Kidney (tissue), 22 donors: ENCODE measurements at regions of chr10 and their contacts with region 1.

Region 1: DNA sequence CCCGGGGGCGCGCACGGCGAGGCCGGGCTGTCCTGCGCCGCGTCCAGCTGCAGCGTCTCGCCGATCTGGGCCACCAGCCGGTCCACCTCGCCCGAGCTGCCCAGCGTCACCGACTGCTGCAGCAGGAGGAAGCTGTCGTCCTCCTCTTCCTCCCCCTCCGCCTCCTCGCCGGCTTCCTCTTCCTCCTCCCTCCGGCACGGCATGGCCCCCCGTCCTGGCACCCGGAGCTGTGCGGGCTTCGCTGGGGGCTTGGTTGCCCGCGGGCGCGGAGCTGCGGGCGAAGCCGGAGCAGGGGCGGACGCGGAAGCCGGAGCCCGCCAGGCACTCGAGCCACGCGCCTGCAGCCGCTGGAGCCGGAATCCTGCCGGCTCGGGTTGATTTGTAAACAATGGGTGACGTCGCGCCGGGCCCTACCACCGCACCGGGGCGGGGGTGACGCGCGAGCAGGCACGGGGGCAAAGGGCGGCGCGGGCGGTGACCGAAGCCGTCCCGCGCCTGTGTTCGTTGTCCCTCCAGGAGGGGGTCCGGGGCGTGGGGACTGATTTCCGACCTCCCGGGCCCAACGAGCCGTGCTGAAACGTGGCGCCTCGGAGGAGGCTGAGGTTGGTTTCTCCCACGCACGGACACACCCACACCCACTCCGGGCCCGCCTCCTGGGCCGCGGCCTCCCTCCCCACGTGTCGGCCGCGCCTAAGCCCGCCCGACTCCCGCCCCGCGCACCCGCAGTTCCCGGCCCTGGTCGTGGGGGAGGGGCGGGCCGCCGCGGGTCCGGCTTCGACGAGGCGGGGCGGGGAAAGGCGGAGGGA is at the start of gene FRAT2:
- DNase-seq: peak; percentile 91 to 97 (median 95)
- H3K4me3 ChIP-seq: peak within 1 kb of the TSS; percentile 59 to 87 (median 79)
- H3K27ac ChIP-seq: peak within 1 kb of the TSS; percentile 92 to 95
- H3K4me1 ChIP-seq: peaks cover 0 to 17% (median 8%) of the 10 kb centered on the region in 3 donors
- H3K27me3 ChIP-seq: no peaks in the 10 kb centered on the region
- CTCF ChIP-seq: no peak
- total RNA-seq, gene FRAT2: 16.8 TPM

Region 2: DNA sequence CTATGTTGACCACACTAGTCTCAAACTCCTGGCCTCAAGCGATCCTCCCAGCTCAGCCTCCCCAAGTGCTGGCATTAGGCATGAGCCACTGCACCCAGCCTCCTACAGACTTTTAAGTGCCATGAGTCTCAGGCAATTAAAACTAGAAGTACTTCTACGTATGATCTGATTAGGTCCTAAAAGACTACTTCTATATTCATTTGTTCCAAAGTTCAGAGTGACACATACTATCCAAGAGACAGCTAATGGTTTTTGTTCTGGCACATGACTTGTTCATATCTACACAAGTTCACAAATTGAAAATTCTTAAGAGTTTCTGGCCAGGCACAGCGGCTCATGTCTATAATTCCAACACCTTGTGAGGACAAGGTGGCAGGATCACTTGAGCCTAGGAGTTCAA is 53.8 kb before region 1 on chr10:
- intact Hi-C with region 1: loop called (anchors 10 kb)
- DNase-seq: no peak
- H3K4me3 ChIP-seq: no peak overlapping the region
- H3K27ac ChIP-seq: no peak overlapping the region
- H3K4me1 ChIP-seq: no peaks in the 10 kb centered on the region
- H3K27me3 ChIP-seq: no peaks in the 10 kb centered on the region
- CTCF ChIP-seq: no peak

Region 3: DNA sequence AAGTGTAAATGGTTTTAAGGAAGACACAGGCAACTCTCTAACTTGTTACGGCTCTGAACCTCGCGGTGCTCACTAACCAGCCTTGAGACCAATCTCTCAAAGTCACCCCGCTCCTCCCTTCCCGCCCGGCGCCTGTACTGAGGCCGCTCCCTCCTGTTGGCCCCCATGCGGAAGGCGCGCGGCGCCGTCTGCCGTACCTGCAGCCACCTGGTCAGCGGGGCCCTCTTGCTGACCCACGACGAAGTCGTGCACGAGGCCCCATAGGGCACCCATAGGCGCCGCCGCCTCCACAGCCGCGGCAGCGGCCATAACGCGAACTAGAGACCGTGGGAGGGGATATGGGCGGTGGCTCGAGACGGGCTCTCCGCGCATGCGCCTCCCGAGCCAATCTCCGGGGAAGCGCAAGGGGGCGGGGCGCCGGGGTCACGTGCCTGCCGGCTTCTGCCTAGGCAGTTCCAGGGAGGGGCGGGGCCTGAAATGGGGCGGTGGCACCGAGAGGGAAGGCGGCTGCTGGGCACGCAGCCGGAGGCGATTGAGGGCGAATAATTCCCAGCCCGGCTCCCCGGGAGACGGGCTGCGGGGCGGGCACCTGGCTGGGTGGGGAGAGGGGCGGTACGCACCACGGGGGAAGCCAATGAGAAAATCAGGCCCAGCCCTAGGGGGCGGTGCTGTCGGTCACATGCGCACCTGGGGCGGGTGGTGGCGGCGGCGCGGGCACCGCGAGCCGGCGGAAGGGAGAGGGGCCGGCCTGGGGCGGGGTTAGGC is 163.7 kb after region 1 on chr10 and contains the start of gene MMS19:
- intact Hi-C with region 1: no loop called
- DNase-seq: peak; percentile 99 to 100 (median 100)
- H3K4me3 ChIP-seq: peak within 1 kb of the TSS; percentile 91 to 99 (median 96)
- H3K27ac ChIP-seq: peak within 1 kb of the TSS; percentile 82 to 88
- H3K4me1 ChIP-seq: peaks cover 0 to 15% (median 10%) of the 10 kb centered on the region in 3 donors
- H3K27me3 ChIP-seq: no peaks in the 10 kb centered on the region
- CTCF ChIP-seq: peak; percentile 17
- total RNA-seq, gene MMS19: 56.1 TPM